HepG2 (cell line): ENCODE measurements at regions of chr2 and their contacts with region 1.

Region 1: DNA sequence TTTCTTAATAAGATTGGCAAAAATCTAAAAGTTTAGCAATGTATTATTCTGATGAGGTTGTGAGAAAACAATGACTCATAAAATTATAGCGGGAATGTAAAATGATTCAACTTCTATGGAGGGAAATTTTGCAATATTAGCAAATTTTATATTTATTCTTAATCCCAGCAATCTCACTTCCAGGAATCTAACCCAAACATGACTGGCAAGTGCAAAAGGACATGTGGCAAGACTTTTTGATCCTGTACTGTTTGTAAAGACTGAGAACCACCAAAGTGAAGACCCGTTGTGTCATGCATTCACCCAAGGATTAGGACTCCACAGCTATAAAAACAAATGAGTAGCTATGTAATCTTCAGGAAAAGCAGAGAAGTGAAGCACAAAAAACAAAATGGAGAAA is 234.8 kb upstream of the KYNU start:
- DNase-seq: no peak
- ATAC-seq: no peak
- H3K4me3 ChIP-seq: no peak overlapping the region
- H3K27ac ChIP-seq: no peak overlapping the region
- H3K4me1 ChIP-seq: no peaks in the 10 kb centered on the region
- H3K27me3 ChIP-seq: peaks cover 0 to 4% of the 10 kb centered on the region in 2 experiments; a peak in 1 of 5 replicates
- CTCF ChIP-seq: no peak
- EP300 ChIP-seq: no peak
- POLR2A ChIP-seq: no peak
- RAD21 ChIP-seq: no peak

Region 2: GRCh38 chr2:142165790-142166189 is 476.9 kb before region 1 on chr2:
- CTCF ChIA-PET with region 1: no interaction called
- POLR2A ChIA-PET with region 1: no interaction called
- in situ Hi-C with region 1: no loop called
- intact Hi-C with region 1: loop called (anchors 1 kb)
- DNase-seq: peak; percentile 38
- ATAC-seq: peak; percentile 99
- H3K4me3 ChIP-seq: no peak overlapping the region
- H3K27ac ChIP-seq: no peak overlapping the region
- H3K4me1 ChIP-seq: no peaks in the 10 kb centered on the region
- H3K27me3 ChIP-seq: no peaks in the 10 kb centered on the region
- CTCF ChIP-seq: peak; percentile 55
- EP300 ChIP-seq: no peak
- POLR2A ChIP-seq: no peak
- RAD21 ChIP-seq: no peak

Region 3: GRCh38 chr2:142286606-142287005 is 356.0 kb before region 1 on chr2:
- CTCF ChIA-PET with region 1: interaction called, 8 read pairs
- POLR2A ChIA-PET with region 1: no interaction called
- in situ Hi-C with region 1: no loop called
- intact Hi-C with region 1: loop called (anchors 2 kb)
- DNase-seq: peak; percentile 55
- ATAC-seq: peak; percentile 97
- H3K4me3 ChIP-seq: no peak overlapping the region
- H3K27ac ChIP-seq: no peak overlapping the region
- H3K4me1 ChIP-seq: no peaks in the 10 kb centered on the region
- H3K27me3 ChIP-seq: no peaks in the 10 kb centered on the region
- CTCF ChIP-seq: peak; percentile 80
- EP300 ChIP-seq: no peak
- POLR2A ChIP-seq: no peak
- RAD21 ChIP-seq: peak; percentile 36; the same call in 1 of the 2 replicates

Region 4: GRCh38 chr2:143015656-143016055 is 373.0 kb after region 1 on chr2:
- CTCF ChIA-PET with region 1: no interaction called
- POLR2A ChIA-PET with region 1: no interaction called
- in situ Hi-C with region 1: no loop called
- intact Hi-C with region 1: no loop called
- DNase-seq: no peak
- ATAC-seq: no peak
- H3K4me3 ChIP-seq: no peak overlapping the region
- H3K27ac ChIP-seq: no peak overlapping the region
- H3K4me1 ChIP-seq: no peaks in the 10 kb centered on the region
- H3K27me3 ChIP-seq: no peaks in the 10 kb centered on the region; a peak in 1 of 5 replicates
- CTCF ChIP-seq: no peak
- EP300 ChIP-seq: no peak
- POLR2A ChIP-seq: no peak
- RAD21 ChIP-seq: no peak